Sciatic nerve (tissue), 2 donors: ENCODE measurements at regions of chr19 and their contacts with region 1.

Region 1: DNA sequence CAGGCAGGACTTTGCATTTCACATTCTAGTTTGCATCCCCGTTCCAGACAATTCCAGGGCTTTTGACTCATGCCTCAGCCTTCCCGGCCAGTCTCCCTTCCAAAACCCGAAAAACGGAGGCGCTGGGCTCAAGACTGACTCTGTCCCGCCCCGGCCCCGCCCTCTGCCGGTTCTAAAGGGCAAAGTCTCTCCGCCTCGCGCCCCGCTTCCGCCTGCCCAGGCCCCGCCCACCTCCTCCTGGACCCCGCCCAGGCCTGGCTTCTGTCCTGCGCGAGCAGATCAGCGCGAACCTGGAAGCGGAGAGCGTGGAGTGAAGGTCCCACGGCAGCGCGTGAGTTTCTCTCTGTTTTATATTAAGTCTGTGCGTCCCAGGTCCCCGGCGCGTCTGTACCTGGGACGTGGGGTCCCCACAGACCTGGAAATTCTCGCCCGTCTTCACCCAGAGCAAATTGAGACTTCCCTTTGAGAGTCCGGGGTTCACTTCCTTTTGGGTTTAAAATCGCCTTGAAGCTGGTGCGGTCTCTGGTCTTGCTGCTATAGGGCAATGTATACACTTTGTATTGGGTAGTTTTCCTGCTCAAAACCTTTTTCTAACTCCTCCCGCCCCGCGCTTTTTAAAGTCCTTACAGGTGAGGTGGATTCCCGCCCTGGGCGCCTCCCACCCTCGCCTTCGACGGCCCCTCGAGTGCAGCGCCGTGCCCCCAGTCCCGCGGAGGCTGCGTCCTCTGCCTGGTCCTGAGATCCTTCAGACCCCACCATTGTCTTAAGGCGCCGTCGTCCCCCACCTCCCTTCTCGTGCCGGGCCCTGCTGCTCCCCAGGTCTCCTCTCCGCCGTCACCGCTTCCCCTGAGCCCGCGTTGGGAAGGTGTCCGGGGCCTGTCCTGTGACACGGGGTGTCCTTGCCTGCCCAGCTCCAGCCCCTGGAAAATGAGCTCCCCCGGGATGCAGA is 31.2 kb downstream of the ZNF701 start:
- DNase-seq: peak; percentile 97
- ATAC-seq: peak; percentile 98

Region 2: GRCh38 chr19:52640916-52641315 is 39.6 kb after region 1 on chr19:
- intact Hi-C with region 1: no loop called
- DNase-seq: no peak
- ATAC-seq: no peak

Region 3: DNA sequence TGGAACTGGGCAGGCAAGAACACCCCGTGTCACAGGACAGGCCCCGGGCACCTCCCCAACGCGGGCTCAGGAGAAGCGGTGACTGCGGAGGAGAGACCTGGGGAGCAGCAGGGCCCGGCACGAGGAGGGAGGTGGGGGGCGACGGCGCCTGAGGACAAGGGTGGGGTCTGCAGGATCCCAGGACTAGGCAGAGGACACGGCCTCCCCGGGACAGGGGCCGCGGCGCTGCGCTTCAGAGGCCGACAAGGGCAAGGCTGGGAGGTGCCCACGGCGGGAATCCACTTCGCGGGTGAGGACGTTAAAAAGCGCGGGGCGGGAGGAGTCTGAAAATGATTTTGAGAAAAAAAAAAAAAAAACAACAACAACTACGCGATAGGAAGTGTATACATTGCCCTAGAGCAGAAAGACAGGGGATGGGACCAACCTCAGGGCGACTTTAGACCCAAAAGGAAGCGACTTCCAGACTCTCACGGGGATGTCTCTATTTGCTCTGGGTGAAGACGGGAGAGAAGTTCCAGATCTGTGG is 88.6 kb after region 1 on chr19:
- intact Hi-C with region 1: loop called (anchors 10 kb)
- DNase-seq: peak; percentile 68
- ATAC-seq: peak; percentile 72